Astrocyte of the cerebellum (primary cell): ENCODE measurements at regions of chr19 and their contacts with region 1.

Region 1: GRCh38 chr19:57675881-57676280 is 5.9 kb upstream of the ZNF551 start:
- DNase-seq: no peak
- H3K4me3 ChIP-seq: no peak overlapping the region
- CTCF ChIP-seq: no peak

Region 2: DNA sequence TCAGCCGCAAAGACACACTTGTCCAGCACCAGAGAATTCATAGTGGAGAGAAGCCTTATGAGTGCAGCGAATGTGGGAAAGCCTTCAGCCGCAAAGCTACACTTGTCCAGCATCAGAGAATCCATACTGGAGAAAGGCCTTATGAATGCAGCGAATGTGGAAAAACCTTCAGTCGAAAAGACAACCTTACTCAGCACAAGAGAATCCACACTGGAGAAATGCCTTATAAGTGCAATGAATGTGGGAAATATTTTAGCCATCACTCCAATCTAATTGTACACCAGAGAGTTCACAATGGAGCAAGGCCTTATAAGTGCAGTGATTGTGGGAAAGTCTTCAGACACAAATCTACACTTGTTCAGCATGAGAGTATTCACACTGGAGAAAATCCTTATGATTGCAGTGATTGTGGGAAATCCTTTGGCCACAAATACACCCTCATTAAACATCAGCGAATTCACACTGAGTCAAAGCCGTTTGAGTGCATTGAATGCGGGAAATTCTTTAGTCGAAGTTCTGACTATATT is 55.1 kb before region 1 on chr19:
- in situ Hi-C with region 1: loop called (anchors 5 kb)
- DNase-seq: no peak
- H3K4me3 ChIP-seq: no peak overlapping the region
- CTCF ChIP-seq: no peak

Region 3: GRCh38 chr19:57786291-57786690 is 110.4 kb after region 1 on chr19:
- in situ Hi-C with region 1: no loop called
- DNase-seq: no peak
- H3K4me3 ChIP-seq: no peak overlapping the region
- CTCF ChIP-seq: no peak